WTC11 (cell line): ENCODE measurements at regions of chr12 and their contacts with region 1.

Region 1: GRCh38 chr12:95858479-95859343 is at the start of gene SNRPF:
- DNase-seq: peak; percentile 96
- ATAC-seq: peak; percentile 92
- H3K4me3 Mint-ChIP-seq: no peak within 1 kb of the TSS
- H3K27ac Mint-ChIP-seq: peak within 1 kb of the TSS; percentile 21; the same call in 1 of the 2 replicates
- H3K4me1 Mint-ChIP-seq: peaks cover 19% of the 10 kb centered on the region
- H3K27me3 Mint-ChIP-seq: no peaks in the 10 kb centered on the region
- CTCF ChIP-seq: no peak
- total RNA-seq, gene SNRPF: 70.7 to 75.8 TPM (median 74.9 TPM) in 3 replicates

Region 2: GRCh38 chr12:95143621-95144205 is 715.0 kb before region 1 on chr12:
- CTCF ChIA-PET with region 1: no interaction called
- POLR2A ChIA-PET with region 1: no interaction called
- DNase-seq: no peak
- ATAC-seq: peak; percentile 56
- H3K4me3 Mint-ChIP-seq: no peak overlapping the region
- H3K27ac Mint-ChIP-seq: peak overlapping the region; percentile 88
- H3K4me1 Mint-ChIP-seq: peaks cover 22% of the 10 kb centered on the region
- H3K27me3 Mint-ChIP-seq: no peaks in the 10 kb centered on the region
- CTCF ChIP-seq: no peak

Region 3: DNA sequence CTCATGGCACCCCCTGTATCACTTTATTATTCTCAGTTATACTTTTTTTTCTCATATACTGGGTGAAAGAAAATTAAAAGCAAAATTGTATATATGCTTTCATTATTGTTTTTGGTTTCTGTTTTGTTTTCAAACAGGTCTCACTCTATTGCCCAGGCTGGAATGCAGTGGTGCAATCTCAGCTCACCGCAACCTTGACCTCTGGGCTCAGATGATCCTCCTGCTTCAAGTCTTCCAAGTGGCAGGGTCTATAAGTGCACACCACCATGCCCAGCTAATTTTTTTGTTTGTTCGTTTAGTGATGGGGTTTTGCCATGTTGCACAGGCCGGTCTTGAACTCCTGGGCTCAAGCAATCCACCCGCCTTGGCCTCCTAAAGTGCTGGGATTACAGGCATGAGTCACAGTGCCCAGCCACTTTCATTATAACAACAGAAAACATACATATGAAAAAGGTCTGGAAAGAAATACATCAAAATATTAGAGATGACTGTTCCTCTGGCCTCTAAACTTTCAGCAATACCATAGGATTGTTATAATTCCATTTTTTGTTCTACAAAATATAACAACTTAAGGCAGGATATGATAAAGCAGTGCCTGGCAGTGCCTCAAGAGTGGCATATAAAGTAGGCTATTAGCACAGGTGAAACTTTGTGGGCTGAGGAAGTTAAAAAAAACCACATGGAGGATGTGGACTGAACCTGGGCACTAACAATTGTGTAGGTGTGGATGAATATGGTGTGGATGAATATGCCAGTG is 62.3 kb before region 1 on chr12:
- CTCF ChIA-PET with region 1: no interaction called
- POLR2A ChIA-PET with region 1: no interaction called
- DNase-seq: no peak
- ATAC-seq: no peak
- H3K4me3 Mint-ChIP-seq: no peak overlapping the region
- H3K27ac Mint-ChIP-seq: no peak overlapping the region
- H3K4me1 Mint-ChIP-seq: peaks cover 10% of the 10 kb centered on the region
- H3K27me3 Mint-ChIP-seq: peaks cover 37% of the 10 kb centered on the region
- CTCF ChIP-seq: no peak

Region 4: DNA sequence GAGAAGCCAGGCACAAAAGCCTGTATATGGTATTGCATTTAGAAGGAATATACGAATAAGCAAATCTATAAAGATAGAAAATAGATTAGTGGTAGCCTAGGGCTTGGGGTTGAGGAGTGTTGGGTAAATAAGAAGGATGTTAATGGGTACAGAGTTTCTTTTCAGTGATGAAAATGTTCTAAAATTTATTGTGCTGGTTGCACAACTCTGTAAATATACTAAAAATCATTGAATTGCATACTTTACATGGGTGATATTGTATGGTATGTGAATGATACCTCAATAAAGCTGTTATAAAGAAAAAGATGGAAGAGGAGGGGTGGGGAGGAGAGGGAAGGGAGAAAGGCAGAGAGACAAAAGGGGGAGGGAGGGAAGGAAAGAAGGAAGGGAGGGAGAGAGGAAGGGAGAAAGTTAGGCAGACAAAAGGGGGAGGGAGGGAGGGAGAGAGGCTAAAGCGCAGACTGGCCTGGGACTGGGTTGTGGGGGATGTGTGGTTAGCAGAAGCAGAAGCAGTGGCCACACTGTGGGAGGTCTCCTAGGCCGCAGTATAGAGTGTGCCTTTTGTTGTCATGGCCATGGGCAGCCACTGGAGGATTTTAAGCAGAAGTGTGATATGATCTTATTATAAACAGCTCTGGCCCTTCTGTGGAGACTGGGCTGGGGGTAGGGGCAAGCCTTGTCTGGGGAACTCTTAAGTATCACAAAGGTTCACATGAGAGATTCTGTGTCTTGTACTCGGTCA is 261.8 kb after region 1 on chr12:
- CTCF ChIA-PET with region 1: no interaction called
- POLR2A ChIA-PET with region 1: interaction called, 11 read pairs
- DNase-seq: peak; percentile 14
- ATAC-seq: peak; percentile 67
- H3K4me3 Mint-ChIP-seq: no peak overlapping the region
- H3K27ac Mint-ChIP-seq: no peak overlapping the region
- H3K4me1 Mint-ChIP-seq: peaks cover 18% of the 10 kb centered on the region
- H3K27me3 Mint-ChIP-seq: no peaks in the 10 kb centered on the region
- CTCF ChIP-seq: no peak